Motor neuron (in vitro differentiated cells): ENCODE measurements at regions of chr17 and their contacts with region 1.

Region 1: DNA sequence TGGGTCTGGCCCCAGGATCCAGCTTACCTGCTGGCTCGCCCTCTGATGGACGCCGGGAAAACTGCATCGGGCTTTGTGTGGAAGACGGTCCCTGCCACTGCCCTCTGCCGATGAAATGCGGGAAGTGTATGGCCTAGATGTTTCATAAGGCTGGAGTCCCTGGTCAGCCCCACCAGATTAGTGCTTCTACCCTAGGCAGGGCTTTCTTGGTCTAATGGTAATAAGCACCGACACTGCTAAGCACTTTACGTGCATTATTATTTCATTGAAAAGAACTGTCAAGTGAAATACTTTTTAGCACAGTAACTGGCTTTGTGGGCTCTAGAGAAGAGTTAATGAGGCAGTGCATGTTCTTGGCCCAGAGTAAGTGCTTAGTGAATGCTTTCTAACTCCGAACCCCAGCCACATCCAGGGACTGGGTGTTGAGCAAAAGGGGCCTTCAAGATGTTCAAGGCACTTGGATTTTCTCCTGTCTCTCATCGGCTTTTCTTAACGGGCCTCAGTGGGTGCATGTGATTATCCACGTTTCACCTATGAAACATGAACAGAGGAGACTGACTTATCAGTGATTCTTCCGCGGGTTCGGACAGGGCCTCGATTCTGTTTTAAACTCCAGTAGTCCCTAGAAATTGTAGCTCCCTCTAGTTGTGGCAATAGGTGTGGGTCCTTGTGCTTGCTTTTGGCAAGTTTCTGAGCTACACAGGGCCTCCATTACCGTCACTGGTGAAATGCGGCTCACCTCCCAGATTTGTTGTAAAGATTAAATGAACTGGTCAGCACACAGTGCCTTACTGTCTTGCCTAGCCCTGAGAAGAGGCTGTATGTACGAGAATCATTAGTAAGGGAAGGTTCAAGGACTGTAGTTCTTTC is 6.6 kb downstream of the TRAF4 start:
- ATAC-seq: peak; percentile 20 to 63 (median 53)
- H3K4me3 ChIP-seq: peak overlapping the region in 2 of 5 donors; percentile 1 to 4
- H3K27ac ChIP-seq: peak overlapping the region in 1 of 2 donors; percentile 15
- H3K4me1 ChIP-seq: peaks cover 22 to 23% of the 10 kb centered on the region in 2 donors

Region 2: DNA sequence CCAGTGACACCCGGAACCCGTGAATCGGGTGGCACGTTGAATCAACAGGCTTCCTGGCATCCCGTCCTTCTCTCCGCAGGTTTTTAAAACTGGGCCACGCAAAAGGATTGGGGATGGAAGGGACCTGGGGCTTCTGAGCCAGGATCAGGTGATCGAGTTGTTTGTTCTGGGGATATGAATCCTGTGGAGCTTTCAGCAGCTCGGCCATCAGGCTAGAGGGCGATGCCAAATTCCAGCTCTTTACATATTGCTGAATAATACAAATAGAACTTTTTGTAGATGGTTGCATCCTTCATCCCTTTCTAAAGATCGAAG is 87.9 kb before region 1 on chr17:
- in situ Hi-C with region 1: no loop called
- ATAC-seq: peak in 6 of 8 experiments; percentile 4 to 49 (median 12)
- H3K4me3 ChIP-seq: peak overlapping the region; percentile 70 to 94 (median 84)
- H3K27ac ChIP-seq: peak overlapping the region; percentile 98 to 99
- H3K4me1 ChIP-seq: peaks cover 2 to 13% of the 10 kb centered on the region in 2 donors

Region 3: DNA sequence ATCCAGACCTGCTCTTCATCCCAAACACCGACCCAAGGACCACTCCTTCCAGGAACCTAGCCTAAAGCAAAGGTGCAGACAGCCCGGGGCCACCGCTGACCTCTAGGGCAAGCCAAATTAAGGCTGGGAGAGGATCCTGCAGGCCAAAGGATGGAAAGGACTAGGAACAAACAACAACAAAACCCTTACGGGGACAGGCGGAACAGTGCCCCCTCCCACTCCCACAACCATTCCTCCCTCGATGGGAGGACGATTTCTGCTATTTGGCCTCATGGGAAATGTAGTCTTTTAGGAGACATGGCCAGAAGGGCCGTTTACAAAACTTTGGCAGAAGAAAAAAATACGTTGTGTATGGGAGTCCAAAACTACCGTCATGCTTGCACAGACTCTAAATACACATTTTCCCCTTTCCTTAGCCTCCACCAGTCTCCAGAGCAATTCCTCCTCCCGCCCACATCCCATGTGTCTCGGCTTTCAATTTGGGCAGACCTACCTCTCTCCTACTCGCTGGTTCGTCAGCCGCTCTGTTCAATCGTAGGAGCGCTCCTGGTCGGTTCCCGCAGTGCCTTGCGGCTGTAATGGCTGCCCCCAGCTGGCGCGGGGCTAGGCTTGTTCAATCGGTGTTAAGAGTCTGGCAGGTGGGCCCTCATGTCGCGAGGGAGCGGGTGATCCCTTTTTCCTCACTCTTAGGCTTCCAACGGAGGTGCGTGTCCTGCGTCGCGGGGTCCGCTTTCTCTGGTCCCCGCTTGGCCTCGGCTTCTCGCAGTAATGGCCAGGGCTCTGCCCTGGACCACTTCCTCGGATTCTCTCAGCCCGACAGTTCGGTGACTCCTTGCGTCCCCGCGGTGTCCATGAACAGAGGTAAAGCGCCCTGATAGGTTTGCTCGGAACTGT is 104.3 kb after region 1 on chr17 and contains the start of gene ERAL1:
- in situ Hi-C with region 1: loop called in 1 of 9 experiments (anchors 25 kb)
- ATAC-seq: peak; percentile 99 to 100 (median 100)
- H3K4me3 ChIP-seq: peak within 1 kb of the TSS; percentile 66 to 95 (median 90)
- H3K27ac ChIP-seq: peak within 1 kb of the TSS; percentile 45 to 71
- H3K4me1 ChIP-seq: peaks cover 3 to 7% of the 10 kb centered on the region in 2 donors
- total RNA-seq, gene ERAL1: 19.0 to 56.8 (median 26.9) TPM

Region 4: DNA sequence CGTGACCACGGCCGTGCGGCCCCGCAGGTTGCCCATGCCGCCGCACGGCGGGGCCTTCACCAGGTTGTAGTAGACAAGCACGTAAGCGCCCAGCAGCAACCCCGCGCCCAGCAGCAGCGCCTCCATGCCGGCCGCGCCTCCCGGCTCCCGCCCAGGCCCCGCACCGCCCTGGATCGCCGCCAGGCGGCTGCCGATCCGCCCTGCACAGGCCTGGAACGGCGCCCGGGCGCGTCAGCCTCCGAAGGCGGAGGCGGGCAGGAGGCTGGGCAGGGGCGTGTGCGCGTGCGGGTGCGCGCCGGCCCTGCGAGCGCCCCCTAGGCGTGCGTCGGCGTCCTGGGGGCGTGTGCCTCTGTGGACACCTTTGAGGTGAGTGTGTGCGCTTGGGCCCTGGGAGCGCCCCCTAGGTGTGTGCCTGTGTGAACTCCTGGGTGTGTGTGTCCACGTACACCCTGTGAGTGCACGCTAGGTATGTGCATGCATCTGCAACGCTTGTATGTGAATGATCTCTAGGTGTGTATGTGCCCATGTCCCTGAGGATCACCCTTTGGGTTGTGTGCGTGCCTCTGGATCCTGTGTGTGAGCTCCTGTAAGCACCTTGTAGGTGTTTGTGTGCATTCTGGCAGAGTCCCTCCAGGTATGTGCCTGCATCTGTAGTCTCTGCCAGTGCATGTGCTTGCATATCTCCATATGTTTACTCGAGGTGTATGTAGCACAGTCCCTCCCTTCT is 152.6 kb after region 1 on chr17 and contains the start of gene DHRS13:
- in situ Hi-C with region 1: loop called in 2 of 9 experiments (anchors 25 kb)
- ATAC-seq: peak; percentile 76 to 93 (median 90)
- H3K4me3 ChIP-seq: peak within 1 kb of the TSS; percentile 48 to 82 (median 58)
- H3K27ac ChIP-seq: peak within 1 kb of the TSS; percentile 79 to 80
- H3K4me1 ChIP-seq: peaks cover 3 to 10% of the 10 kb centered on the region in 2 donors
- total RNA-seq, gene DHRS13: 2.2 to 14.4 (median 11.1) TPM